ENCODE measurements at regions of chr10 and their contacts with region 1.

Region 1: GRCh38 chr10:89391917-89392756 is at the start of gene IFIT1:
- DNase-seq: peak; percentile 82
- H3K4me3 ChIP-seq: peak within 1 kb of the TSS; percentile 51
- H3K27ac ChIP-seq: peak within 1 kb of the TSS; percentile 31
- H3K4me1 ChIP-seq: no peaks in the 10 kb centered on the region
- H3K27me3 ChIP-seq: no peaks in the 10 kb centered on the region
- CTCF ChIP-seq: no peak
- total RNA-seq, gene IFIT1: 2.4 and 3.2 TPM in 2 replicates

Region 2: GRCh38 chr10:88901206-88901983 is 490.7 kb before region 1 on chr10:
- CTCF ChIA-PET with region 1: no interaction called
- POLR2A ChIA-PET with region 1: no interaction called
- intact Hi-C with region 1: no loop called
- DNase-seq: no peak
- H3K4me3 ChIP-seq: no peak overlapping the region
- H3K27ac ChIP-seq: no peak overlapping the region
- H3K4me1 ChIP-seq: peaks cover 34% of the 10 kb centered on the region
- H3K27me3 ChIP-seq: no peaks in the 10 kb centered on the region
- CTCF ChIP-seq: no peak

Region 3: DNA sequence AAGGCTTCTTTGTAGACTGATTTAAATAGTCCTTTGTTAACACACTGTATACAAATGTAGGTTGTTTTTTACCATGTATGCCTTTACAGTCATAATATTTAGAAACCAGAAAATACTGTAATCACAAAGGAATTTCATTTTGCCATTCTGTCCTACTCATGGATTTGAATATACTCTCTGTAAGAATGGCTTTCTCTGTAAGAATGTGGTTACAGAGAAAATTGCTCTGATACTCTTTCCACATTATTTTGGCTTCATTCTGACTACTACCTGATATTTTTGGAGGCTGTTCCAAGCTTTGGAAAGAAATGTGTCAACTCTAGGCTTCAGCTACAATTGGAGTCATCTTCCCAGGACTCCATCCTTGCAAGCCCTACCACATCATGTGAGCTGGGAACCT is 208.6 kb before region 1 on chr10:
- CTCF ChIA-PET with region 1: no interaction called
- POLR2A ChIA-PET with region 1: no interaction called
- intact Hi-C with region 1: no loop called
- DNase-seq: no peak
- H3K4me3 ChIP-seq: no peak overlapping the region
- H3K27ac ChIP-seq: no peak overlapping the region
- H3K4me1 ChIP-seq: no peaks in the 10 kb centered on the region
- H3K27me3 ChIP-seq: no peaks in the 10 kb centered on the region
- CTCF ChIP-seq: no peak

Region 4: GRCh38 chr10:89404104-89405047 is 12.2 kb after region 1 on chr10:
- CTCF ChIA-PET with region 1: no interaction called
- POLR2A ChIA-PET with region 1: interaction called, 18 read pairs
- intact Hi-C with region 1: no loop called
- DNase-seq: no peak
- H3K4me3 ChIP-seq: no peak overlapping the region
- H3K27ac ChIP-seq: no peak overlapping the region
- H3K4me1 ChIP-seq: no peaks in the 10 kb centered on the region
- H3K27me3 ChIP-seq: no peaks in the 10 kb centered on the region
- CTCF ChIP-seq: no peak